A549 (cell line): ENCODE measurements at regions of chr14 and their contacts with region 1.

Region 1: DNA sequence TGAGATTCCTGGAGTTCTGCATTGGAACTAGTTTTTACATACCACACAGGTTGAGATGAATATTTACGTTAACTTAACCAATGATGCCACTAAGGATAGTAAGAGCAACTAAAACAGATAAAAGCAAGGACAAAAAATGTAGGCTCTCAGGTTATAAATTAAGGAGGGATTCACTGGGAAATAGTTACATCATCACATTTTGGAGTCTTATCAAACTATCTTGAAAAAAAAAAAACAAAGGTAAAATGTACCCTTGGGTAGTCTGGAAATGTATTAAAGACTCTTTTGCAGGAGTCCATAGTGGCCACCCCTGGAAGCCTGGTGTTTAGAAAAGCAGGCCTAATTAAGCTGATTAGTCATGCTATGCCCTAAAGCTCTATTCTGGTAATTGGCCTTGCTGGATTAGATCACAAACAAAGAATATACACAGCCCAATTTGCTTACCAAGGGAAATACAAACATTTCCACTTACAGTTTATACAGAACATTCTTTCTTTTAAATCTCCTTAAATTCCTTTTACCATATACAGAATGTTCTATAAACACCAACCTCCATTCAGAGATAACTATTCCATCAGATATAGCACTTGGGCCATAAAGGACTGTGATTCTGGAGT is 39.3 kb downstream of the SLC25A47 start:
- DNase-seq: no peak
- ATAC-seq: no peak
- H3K4me3 ChIP-seq: no peak overlapping the region
- H3K27ac ChIP-seq: no peak overlapping the region
- H3K4me1 ChIP-seq: no peaks in the 10 kb centered on the region
- CTCF ChIP-seq: no peak
- EP300 ChIP-seq: no peak
- POLR2A ChIP-seq: no peak
- RAD21 ChIP-seq: no peak

Region 2: GRCh38 chr14:100330388-100330931 is 32.0 kb before region 1 on chr14:
- CTCF ChIA-PET with region 1: no interaction called
- POLR2A ChIA-PET with region 1: no interaction called
- DNase-seq: no peak
- ATAC-seq: peak in 1 of 2 experiments; percentile 4; a peak in 2 of 6 replicates
- H3K4me3 ChIP-seq: no peak overlapping the region
- H3K27ac ChIP-seq: no peak overlapping the region
- H3K4me1 ChIP-seq: no peaks in the 10 kb centered on the region
- CTCF ChIP-seq: no peak
- EP300 ChIP-seq: no peak
- POLR2A ChIP-seq: no peak
- RAD21 ChIP-seq: no peak

Region 3: GRCh38 chr14:100348784-100349704 is 13.4 kb before region 1 on chr14:
- CTCF ChIA-PET with region 1: interaction called, 11 read pairs
- POLR2A ChIA-PET with region 1: no interaction called
- DNase-seq: no peak
- ATAC-seq: peak in 1 of 2 experiments; percentile 31; a peak in 2 of 6 replicates
- H3K4me3 ChIP-seq: no peak overlapping the region
- H3K27ac ChIP-seq: no peak overlapping the region
- H3K4me1 ChIP-seq: no peaks in the 10 kb centered on the region
- CTCF ChIP-seq: no peak
- EP300 ChIP-seq: no peak
- POLR2A ChIP-seq: no peak
- RAD21 ChIP-seq: no peak